ENCODE measurements at regions of chr6 and their contacts with region 1.

Region 1: GRCh38 chr6:108052706-108053105 is 21.8 kb downstream of the OSTM1 start:
- DNase-seq: no peak

Region 2: DNA sequence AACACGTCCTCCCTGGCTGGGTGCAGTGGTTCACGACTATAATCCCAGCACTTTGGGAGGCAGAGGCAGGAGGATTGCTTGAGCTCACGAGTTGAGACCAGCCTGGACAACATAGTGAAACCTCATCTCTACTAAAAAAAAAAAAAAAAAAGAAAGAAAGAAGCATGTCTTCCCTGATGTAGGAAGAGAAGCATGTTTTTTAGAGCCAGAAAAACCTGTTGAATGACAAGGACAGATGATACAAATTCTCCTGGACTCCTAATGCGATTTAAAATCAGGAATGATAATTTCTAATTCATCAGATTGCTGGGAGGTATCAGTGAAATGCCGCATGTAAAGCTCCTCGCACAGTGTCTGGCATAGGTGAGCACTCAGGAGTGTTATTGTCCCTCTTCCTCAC is 71.0 kb before region 1 on chr6:
- intact Hi-C with region 1: loop called (anchors 2 kb)
- DNase-seq: no peak